Kidney (tissue), 22 donors: ENCODE measurements at regions of chr3 and their contacts with region 1.

Region 1: DNA sequence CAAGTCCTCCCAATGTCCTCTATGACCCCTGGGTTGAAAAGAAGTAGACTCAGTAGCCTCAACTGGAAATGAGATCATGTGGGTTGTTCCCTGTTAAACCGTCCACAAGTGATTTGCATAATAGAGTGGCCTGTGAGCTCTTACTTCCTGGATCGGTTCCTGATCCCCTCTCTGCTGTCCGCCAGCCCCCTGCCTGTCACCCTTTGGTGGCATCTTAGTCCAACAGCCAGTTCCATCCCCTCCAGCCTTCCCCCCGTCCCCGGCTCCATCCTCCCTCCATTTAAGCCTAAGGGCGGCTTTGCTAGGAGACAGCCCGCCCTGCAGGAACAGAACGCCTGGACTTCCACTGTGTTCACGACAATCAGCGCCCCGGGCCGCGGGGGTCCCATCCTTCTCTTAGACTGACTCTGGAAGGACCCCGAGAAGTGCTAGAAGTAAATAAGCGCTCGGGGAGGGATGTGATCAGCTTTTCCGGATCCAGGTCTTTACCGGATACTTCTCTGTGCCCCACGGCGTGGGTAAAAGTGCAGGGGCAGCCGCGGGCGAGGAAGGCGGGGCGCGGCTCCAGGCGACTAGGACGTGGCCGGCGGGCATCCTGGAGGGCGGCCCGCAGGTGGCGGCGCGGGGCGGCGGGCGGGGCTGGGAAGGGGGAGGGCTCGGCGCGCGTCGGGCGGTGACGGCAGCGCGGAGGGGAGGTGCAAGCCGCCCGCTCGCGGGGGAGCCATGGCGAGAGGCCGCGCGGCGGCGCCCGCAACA is 51.2 kb upstream of the ULK4 start:
- DNase-seq: peak; percentile 62 to 92 (median 83)
- H3K4me3 ChIP-seq: peak overlapping the region; percentile 1 to 75 (median 57)
- H3K27ac ChIP-seq: peak overlapping the region; percentile 83 to 85
- H3K4me1 ChIP-seq: peaks cover 0 to 8% (median 7%) of the 10 kb centered on the region in 3 donors
- H3K27me3 ChIP-seq: no peaks in the 10 kb centered on the region
- CTCF ChIP-seq: no peak

Region 2: DNA sequence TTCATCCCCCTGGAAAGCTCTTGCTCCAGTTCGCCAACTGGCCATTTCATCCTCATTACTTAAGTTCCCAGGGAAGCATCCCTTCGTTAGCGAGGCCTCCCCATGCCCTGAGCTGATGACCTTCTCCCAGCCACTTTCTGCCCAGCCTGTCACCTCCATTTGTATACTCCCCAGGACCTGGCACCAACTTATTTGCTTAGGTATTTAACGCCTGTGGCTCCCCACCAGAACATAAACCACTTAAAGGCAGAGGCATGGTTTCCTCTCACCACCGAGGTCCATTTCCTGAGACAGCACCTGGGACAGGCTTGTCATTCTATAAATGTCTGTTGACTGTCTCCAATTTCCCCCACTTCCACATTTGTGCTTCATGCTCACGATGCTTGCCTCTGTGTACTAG is 1299.3 kb before region 1 on chr3:
- intact Hi-C with region 1: no loop called
- DNase-seq: no peak
- H3K4me3 ChIP-seq: no peak overlapping the region
- H3K27ac ChIP-seq: no peak overlapping the region
- H3K4me1 ChIP-seq: no peaks in the 10 kb centered on the region
- H3K27me3 ChIP-seq: no peaks in the 10 kb centered on the region
- CTCF ChIP-seq: no peak

Region 3: DNA sequence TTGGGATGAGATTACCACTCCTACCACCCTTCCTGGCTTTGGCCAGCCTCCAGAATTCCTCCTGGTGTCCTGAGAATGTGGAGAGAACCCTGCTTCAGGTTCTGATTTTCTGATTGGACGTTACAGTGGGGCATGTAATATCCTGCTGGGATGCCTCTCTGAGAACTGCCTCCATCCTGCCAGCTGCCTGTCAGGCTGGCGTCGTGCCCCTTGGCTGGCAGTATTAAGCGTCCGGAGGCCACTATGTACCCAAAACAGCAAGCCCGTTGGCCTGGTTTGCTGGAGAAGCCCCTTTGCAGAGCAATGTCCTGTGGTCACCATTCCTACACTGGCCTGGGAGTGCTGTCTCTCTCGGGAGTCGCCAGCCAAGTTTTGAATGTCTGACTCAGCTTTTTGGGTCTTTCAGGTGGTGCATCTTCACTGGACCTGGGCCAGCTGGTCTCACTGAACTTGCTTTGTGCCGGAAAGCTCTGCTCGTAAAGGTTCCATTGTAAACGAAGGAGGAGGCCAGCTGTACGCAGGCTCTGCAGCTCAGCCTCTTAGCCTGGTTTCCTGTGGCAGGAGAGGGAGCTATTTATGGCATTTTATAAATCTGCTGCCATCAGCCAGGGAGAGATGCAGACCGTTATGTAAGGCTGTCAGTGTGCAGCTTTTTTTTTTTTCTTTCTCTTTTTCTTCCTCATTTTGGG is 58.9 kb after region 1 on chr3:
- intact Hi-C with region 1: loop called (anchors 10 kb)
- DNase-seq: peak; percentile 68 to 91 (median 79)
- H3K4me3 ChIP-seq: peak overlapping the region in 2 of 3 donors; percentile 8 to 31
- H3K27ac ChIP-seq: peak overlapping the region; percentile 73 to 74
- H3K4me1 ChIP-seq: peaks cover 7 to 27% (median 22%) of the 10 kb centered on the region in 3 donors
- H3K27me3 ChIP-seq: no peaks in the 10 kb centered on the region
- CTCF ChIP-seq: no peak